Panc1 (cell line): ENCODE measurements at regions of chr21 and their contacts with region 1.

Region 1: DNA sequence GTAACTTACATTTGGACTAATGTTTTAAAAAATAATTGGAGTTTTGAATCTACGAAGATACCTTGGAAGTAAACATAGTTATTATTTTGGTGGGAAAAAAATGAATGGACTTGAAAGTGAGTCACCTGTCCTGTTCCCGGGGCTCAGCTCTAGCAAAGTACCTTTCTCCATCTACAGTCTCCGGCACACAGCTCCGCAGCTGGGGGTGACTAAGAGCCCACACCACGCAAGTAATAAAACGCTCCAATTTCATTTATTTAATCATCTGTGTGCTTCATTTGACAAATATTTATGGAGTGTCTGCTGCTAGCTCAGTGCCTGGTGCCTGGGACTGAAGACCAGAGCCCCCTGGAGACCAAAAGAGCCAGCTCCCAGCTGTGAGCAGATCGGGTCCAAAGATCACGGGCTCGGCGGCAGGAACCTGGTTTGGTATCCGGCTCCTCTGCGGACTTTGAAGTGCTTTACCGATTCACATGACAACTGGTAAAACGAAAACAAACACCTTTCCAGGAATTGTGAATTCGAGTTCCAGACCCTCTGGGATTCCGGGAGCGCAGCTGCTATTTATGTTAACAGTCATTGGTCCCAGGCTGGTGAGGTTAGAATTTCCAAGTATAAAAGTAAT is 1.7 kb upstream of the RIPK4 start:
- DNase-seq: no peak
- ATAC-seq: peak; percentile 50
- H3K4me3 ChIP-seq: peak overlapping the region; percentile 72 to 91
- H3K27ac ChIP-seq: peak overlapping the region; percentile 95
- H3K4me1 ChIP-seq: peaks cover 30% of the 10 kb centered on the region
- H3K27me3 ChIP-seq: no peaks in the 10 kb centered on the region
- CTCF ChIP-seq: peak; percentile 67

Region 2: DNA sequence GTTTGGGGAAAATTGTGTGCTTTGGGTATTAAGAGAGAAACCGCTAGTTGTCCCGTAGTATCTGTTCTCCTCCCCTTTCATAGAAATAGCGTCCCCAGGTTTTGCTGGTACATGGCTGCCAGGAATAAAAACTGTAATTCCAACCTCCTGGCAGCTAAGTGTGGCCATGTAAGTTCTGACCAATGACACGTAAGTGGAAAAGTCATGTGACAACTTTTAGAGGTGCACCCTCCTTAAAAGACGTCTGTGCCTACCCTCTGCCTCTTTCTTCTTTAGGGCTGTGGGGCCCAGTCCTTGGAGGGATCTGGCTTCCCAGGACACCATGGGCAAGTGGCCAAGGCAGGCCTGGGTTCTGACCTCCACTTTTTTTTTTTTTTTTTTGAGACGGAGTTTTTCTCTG is 361.9 kb after region 1 on chr21:
- CTCF ChIA-PET with region 1: no interaction called
- POLR2A ChIA-PET with region 1: interaction called, 10 read pairs
- in situ Hi-C with region 1: no loop called
- intact Hi-C with region 1: no loop called
- DNase-seq: no peak
- ATAC-seq: no peak
- H3K4me3 ChIP-seq: no peak overlapping the region
- H3K27ac ChIP-seq: no peak overlapping the region
- H3K4me1 ChIP-seq: no peaks in the 10 kb centered on the region
- H3K27me3 ChIP-seq: no peaks in the 10 kb centered on the region
- CTCF ChIP-seq: no peak